Activated CD4-positive, alpha-beta memory T cell treated with anti-CD3 and anti-CD28 coated beads, Interleukin-2, amount 10 ng/mL, durations not matched to agents 7 days and 5 days (primary cell): ENCODE measurements at regions of chr2 and their contacts with region 1.

Region 1: GRCh38 chr2:108583903-108584520 is 49.7 kb downstream of the LIMS1 start:
- DNase-seq: peak; percentile 65
- H3K4me3 Mint-ChIP-seq: no peak overlapping the region
- H3K27ac Mint-ChIP-seq: no peak overlapping the region
- H3K4me1 Mint-ChIP-seq: peaks cover 45% of the 10 kb centered on the region
- H3K27me3 Mint-ChIP-seq: no peaks in the 10 kb centered on the region

Region 2: GRCh38 chr2:108351889-108352288 is 232.1 kb before region 1 on chr2:
- CTCF ChIA-PET with region 1: interaction called, 10 read pairs
- POLR2A ChIA-PET with region 1: no interaction called
- DNase-seq: no peak
- H3K4me3 Mint-ChIP-seq: no peak overlapping the region
- H3K27ac Mint-ChIP-seq: no peak overlapping the region
- H3K4me1 Mint-ChIP-seq: no peaks in the 10 kb centered on the region
- H3K27me3 Mint-ChIP-seq: peaks cover 8% of the 10 kb centered on the region

Region 3: GRCh38 chr2:108594132-108594981 is 10.3 kb after region 1 on chr2:
- CTCF ChIA-PET with region 1: interaction called, 23 read pairs
- POLR2A ChIA-PET with region 1: interaction called, 3 read pairs
- DNase-seq: no peak
- H3K4me3 Mint-ChIP-seq: peak overlapping the region; percentile 2
- H3K27ac Mint-ChIP-seq: peak overlapping the region; percentile 38
- H3K4me1 Mint-ChIP-seq: peaks cover 55% of the 10 kb centered on the region
- H3K27me3 Mint-ChIP-seq: no peaks in the 10 kb centered on the region